Thyroid gland (tissue), 4 donors: ENCODE measurements at regions of chr7 and their contacts with region 1.

Region 1: DNA sequence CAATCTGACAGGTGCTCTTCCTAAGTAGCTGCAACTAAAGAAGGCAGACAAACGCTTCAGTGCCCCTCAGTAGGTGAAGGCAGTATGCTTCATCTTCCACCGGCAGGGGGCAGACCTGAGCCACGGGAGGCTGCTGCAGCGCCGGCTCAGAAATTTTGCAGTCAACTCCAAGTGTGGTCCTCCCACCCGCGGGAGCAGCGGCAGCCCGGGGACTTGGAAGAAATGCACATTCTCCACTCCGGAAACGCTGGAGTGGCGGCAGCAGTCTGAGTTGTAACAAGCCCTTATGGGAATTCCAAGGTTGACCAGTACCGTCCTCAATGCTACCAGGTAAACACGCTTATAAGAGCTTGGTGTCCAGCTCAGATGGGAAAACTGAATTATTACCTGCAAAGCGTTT is 3.4 kb downstream of the IGFBP3 start:
- DNase-seq: peak; percentile 77 to 86
- H3K4me3 ChIP-seq: no peak overlapping the region
- H3K27ac ChIP-seq: no peak overlapping the region
- H3K4me1 ChIP-seq: peaks cover 14 to 34% of the 10 kb centered on the region in 2 donors
- H3K27me3 ChIP-seq: no peaks in the 10 kb centered on the region
- CTCF ChIP-seq: peak; percentile 78 to 96 (median 88)
- POLR2A ChIP-seq: no peak

Region 2: DNA sequence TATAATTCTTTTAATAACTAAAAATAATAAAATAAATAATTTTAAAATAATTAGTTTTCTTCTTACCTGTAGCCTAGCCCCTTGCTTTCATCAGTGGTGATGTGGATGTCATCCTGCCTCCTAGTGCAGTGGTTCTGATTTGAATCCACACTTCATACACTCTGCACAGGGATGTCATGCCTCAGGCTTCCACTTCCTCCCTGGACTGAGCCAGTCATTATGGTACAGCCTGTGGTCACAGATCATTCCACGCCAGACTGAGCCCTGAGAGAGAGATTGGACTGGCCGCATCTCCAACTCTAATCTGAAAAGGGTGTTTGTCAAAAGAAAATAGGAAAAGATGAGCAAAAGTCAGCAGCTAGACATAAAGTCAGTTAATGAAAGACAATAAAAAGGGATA is 439.6 kb after region 1 on chr7:
- intact Hi-C with region 1: loop called (anchors 5 kb)
- DNase-seq: no peak
- H3K4me3 ChIP-seq: no peak overlapping the region
- H3K27ac ChIP-seq: no peak overlapping the region
- H3K4me1 ChIP-seq: no peaks in the 10 kb centered on the region
- H3K27me3 ChIP-seq: no peaks in the 10 kb centered on the region
- CTCF ChIP-seq: no peak
- POLR2A ChIP-seq: no peak

Region 3: DNA sequence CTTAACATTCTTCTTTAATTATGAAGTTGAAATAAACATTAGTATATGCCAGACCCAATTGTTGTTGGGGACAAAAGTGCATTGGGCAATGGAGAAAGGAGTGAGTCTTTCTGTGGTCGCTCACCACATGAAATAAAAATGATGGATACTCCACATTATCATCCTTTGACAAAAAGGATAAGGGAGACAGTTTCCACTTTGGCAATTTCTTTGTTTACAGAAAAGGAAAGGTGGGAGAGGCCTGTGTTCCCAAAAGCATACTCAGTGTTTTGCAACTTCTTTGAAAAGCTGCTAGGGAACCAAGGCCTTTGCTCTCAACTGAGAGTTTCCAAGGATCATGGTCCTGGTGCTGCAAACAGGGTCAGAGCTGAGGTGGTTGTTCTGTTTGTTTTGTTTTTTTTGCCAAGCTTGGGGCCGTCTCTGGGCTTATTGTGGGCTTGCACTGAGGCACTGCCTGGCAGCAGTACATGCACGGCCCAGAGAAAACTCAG is 1322.3 kb after region 1 on chr7:
- intact Hi-C with region 1: loop called (anchors 10 kb)
- DNase-seq: no peak
- H3K4me3 ChIP-seq: no peak overlapping the region
- H3K27ac ChIP-seq: no peak overlapping the region
- H3K4me1 ChIP-seq: no peaks in the 10 kb centered on the region
- H3K27me3 ChIP-seq: no peaks in the 10 kb centered on the region
- CTCF ChIP-seq: no peak
- POLR2A ChIP-seq: no peak